CD14-positive monocyte (primary cell): ENCODE measurements at regions of chr17 and their contacts with region 1.

Region 1: GRCh38 chr17:10226930-10227685 is 28.7 kb upstream of the GAS7 start:
- DNase-seq: peak; percentile 39 to 64 (median 56)
- H3K4me3 ChIP-seq: no peak overlapping the region
- H3K4me3 Mint-ChIP-seq: no peak overlapping the region
- H3K27ac ChIP-seq: no peak overlapping the region
- H3K27ac Mint-ChIP-seq: no peak overlapping the region
- H3K4me1 ChIP-seq: peaks cover 0 to 7% of the 10 kb centered on the region in 2 donors
- H3K4me1 Mint-ChIP-seq: peaks cover 12% of the 10 kb centered on the region
- H3K27me3 ChIP-seq: no peaks in the 10 kb centered on the region
- H3K27me3 Mint-ChIP-seq: peaks cover 2 to 3% (median 2%) of the 10 kb centered on the region in 3 donors
- CTCF ChIP-seq: peak; percentile 99

Region 2: DNA sequence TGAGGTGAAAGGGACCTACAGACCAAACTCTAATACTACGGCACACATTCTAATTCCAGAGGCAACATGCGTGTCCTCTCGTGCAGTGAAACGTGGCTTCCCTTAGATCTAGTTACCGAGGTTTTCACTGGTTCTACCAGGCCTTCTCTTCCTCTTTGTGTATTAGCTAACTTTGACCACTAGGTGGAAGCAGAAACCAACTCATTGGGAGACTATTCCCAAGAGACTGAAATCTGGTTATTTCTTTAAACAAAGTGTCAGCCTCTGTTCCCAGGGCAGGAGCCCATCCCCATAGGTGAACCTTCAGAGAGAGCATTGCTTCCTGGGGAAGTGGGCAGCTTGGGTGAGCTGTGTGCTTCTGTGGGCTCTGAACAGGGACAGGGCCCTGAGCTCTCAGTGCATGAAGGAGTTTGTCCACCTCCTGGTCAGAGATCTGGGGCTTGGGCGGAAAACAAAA is 302.3 kb before region 1 on chr17:
- intact Hi-C with region 1: loop called in 1 of 2 experiments (anchors 5 kb)
- DNase-seq: peak; percentile 37 to 63 (median 58)
- H3K4me3 ChIP-seq: no peak overlapping the region
- H3K4me3 Mint-ChIP-seq: no peak overlapping the region
- H3K27ac ChIP-seq: peak overlapping the region; percentile 40 to 59
- H3K27ac Mint-ChIP-seq: peak overlapping the region; percentile 32 to 88 (median 64)
- H3K4me1 ChIP-seq: no peaks in the 10 kb centered on the region
- H3K4me1 Mint-ChIP-seq: no peaks in the 10 kb centered on the region
- H3K27me3 ChIP-seq: no peaks in the 10 kb centered on the region
- H3K27me3 Mint-ChIP-seq: peaks cover 0 to 2% (median 2%) of the 10 kb centered on the region in 3 donors
- CTCF ChIP-seq: peak; percentile 85

Region 3: GRCh38 chr17:9982159-9982558 is 244.9 kb before region 1 on chr17:
- intact Hi-C with region 1: loop called in 1 of 2 experiments (anchors 5 kb)
- DNase-seq: peak in 1 of 3 donors; percentile 22
- H3K4me3 ChIP-seq: no peak overlapping the region
- H3K4me3 Mint-ChIP-seq: no peak overlapping the region
- H3K27ac ChIP-seq: peak overlapping the region in 1 of 2 donors; percentile 40
- H3K27ac Mint-ChIP-seq: peak overlapping the region; percentile 36 to 88 (median 58)
- H3K4me1 ChIP-seq: peaks cover 35 to 36% of the 10 kb centered on the region in 2 donors
- H3K4me1 Mint-ChIP-seq: peaks cover 58% of the 10 kb centered on the region
- H3K27me3 ChIP-seq: no peaks in the 10 kb centered on the region
- H3K27me3 Mint-ChIP-seq: peaks cover 0 to 2% (median 1%) of the 10 kb centered on the region in 3 donors
- CTCF ChIP-seq: peak; percentile 16

Region 4: GRCh38 chr17:10115071-10115539 is 112.0 kb before region 1 on chr17:
- intact Hi-C with region 1: loop called (anchors 5 kb)
- DNase-seq: peak; percentile 94 to 98 (median 96)
- H3K4me3 ChIP-seq: peak overlapping the region; percentile 1 to 62 (median 27)
- H3K4me3 Mint-ChIP-seq: peak overlapping the region; percentile 75 to 89
- H3K27ac ChIP-seq: peak overlapping the region; percentile 98 to 99
- H3K27ac Mint-ChIP-seq: peak overlapping the region; percentile 99 to 100 (median 100)
- H3K4me1 ChIP-seq: peaks cover 74 to 82% of the 10 kb centered on the region in 2 donors
- H3K4me1 Mint-ChIP-seq: peaks cover 85% of the 10 kb centered on the region
- H3K27me3 ChIP-seq: no peaks in the 10 kb centered on the region
- H3K27me3 Mint-ChIP-seq: peaks cover 0 to 9% (median 2%) of the 10 kb centered on the region in 3 donors
- CTCF ChIP-seq: no peak

Region 5: GRCh38 chr17:10172241-10172741 is 54.8 kb before region 1 on chr17:
- intact Hi-C with region 1: loop called in 1 of 2 experiments (anchors 5 kb)
- DNase-seq: peak; percentile 85 to 96 (median 96)
- H3K4me3 ChIP-seq: peak overlapping the region in 1 of 3 experiments; percentile 65
- H3K4me3 Mint-ChIP-seq: peak overlapping the region; percentile 76 to 89
- H3K27ac ChIP-seq: peak overlapping the region; percentile 89 to 92
- H3K27ac Mint-ChIP-seq: peak overlapping the region; percentile 96 to 100 (median 99)
- H3K4me1 ChIP-seq: peaks cover 55 to 71% of the 10 kb centered on the region in 2 donors
- H3K4me1 Mint-ChIP-seq: peaks cover 86% of the 10 kb centered on the region
- H3K27me3 ChIP-seq: no peaks in the 10 kb centered on the region
- H3K27me3 Mint-ChIP-seq: peaks cover 0 to 4% (median 0%) of the 10 kb centered on the region in 3 donors
- CTCF ChIP-seq: no peak

Region 6: GRCh38 chr17:10271106-10271562 is 44.0 kb after region 1 on chr17:
- intact Hi-C with region 1: no loop called
- DNase-seq: peak in 1 of 3 donors; percentile 53
- H3K4me3 ChIP-seq: no peak overlapping the region
- H3K4me3 Mint-ChIP-seq: no peak overlapping the region
- H3K27ac ChIP-seq: no peak overlapping the region
- H3K27ac Mint-ChIP-seq: no peak overlapping the region
- H3K4me1 ChIP-seq: no peaks in the 10 kb centered on the region
- H3K4me1 Mint-ChIP-seq: peaks cover 11% of the 10 kb centered on the region
- H3K27me3 ChIP-seq: no peaks in the 10 kb centered on the region
- H3K27me3 Mint-ChIP-seq: peaks cover 2 to 11% (median 9%) of the 10 kb centered on the region in 3 donors
- CTCF ChIP-seq: no peak